Posterior vena cava (tissue), 2 donors: ENCODE measurements at regions of chr5 and their contacts with region 1.

Region 1: GRCh38 chr5:97528941-97529340 is 345.9 kb upstream of the RIOK2 start:
- DNase-seq: no peak

Region 2: DNA sequence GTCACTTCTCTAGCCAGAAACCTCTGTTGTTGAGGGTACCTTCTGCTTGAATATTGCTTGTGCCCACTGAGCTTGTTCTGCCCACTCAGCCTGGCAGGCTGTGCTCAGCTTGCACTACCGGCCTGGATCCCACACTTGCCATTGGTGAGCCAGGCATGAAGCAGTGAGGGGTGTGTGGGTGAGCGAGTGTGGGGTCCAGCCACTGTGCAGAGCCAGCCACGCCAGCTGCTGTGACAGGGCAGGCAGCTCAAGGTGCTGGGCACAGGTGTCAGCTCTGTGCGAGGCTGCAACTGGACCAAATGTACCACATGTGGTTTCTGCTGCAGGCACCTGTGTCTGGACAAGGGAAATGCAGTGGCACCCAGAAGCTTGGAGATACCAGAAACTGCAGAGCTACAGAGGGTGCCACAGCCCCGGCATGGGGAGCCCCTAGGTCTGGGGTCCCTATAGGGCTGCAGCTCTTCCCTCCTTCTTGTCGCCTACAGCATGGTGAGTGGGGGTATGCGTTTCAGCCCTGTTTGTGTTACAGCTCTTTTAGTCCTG is 40.7 kb before region 1 on chr5:
- intact Hi-C with region 1: loop called in 1 of 2 experiments (anchors 5 kb)
- DNase-seq: no peak

Region 3: DNA sequence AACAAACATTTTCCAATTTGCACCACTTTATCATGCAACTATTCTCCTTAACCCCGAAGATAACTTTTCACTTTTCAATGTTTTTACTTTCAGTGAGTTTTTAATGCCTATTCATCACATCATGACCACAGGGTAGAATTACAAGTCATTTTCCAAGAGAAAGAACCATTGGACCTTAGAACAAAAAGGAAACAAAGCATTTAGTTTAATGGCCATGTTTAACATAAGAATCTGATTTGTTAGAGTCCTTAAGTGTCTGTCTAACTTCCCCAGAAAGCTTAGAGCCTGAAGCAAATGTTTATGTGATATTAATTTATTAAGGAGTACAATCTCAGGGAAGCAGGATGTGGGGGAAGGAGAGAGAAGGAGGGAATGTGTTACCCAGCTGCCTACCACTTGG is 20.1 kb before region 1 on chr5:
- intact Hi-C with region 1: no loop called
- DNase-seq: no peak